ENCODE measurements at regions of chr20 and their contacts with region 1.

Region 1: DNA sequence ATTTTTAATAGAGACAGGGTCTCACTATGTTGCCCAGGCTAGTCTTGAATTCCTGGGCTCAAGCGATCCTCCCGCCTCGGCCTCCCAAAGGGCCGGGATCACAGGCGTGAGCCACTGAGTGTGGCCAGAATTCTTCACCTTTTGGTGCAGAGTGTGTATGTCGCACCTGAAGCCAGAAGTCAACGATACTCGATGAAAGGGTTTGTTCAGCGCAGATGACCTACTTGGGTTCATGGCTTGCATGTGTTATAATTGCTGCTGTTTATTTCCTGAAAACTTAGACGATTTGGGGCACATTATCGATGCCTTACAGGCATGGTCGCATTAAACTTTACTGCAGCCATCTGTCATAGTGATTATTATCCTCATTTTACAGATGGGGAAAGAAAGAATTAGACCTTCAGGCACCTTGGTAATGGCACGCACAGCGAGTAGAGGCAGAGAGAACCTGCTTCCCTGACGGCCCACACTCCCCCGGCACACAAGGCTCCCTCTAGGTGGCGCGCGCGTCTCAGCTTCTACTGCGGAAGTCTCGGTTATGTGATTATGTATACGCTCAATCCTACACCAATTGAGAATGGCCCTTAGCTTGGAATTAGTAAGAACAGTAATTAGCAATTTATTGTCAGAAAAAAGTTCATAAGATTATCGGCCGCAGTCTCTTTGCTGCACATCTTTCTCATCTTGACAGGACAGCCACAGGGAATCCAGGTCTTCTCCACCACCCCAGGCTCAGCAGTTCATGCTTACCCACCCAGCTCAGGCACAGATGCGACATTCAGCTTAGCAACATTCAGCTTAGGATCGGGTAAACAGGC is 212.8 kb upstream of the PROKR2 start:
- DNase-seq: peak; percentile 47
- ATAC-seq: peak; percentile 91
- H3K4me3 ChIP-seq: no peak overlapping the region
- H3K27ac ChIP-seq: no peak overlapping the region
- H3K4me1 ChIP-seq: peaks cover 0 to 7% of the 10 kb centered on the region in 2 experiments; a peak in 1 of 4 replicates
- H3K27me3 ChIP-seq: no peaks in the 10 kb centered on the region
- CTCF ChIP-seq: peak; percentile 69 to 95 (median 94); a peak in 5 of 6 replicates
- POLR2A ChIP-seq: no peak
- RAD21 ChIP-seq: peak; percentile 85

Region 2: GRCh38 chr20:5539691-5540090 is 10.2 kb after region 1 on chr20:
- CTCF ChIA-PET with region 1: interaction called, 10 read pairs
- POLR2A ChIA-PET with region 1: no interaction called
- RAD21 ChIA-PET with region 1: no interaction called
- intact Hi-C with region 1: no loop called
- DNase-seq: no peak
- ATAC-seq: no peak
- H3K4me3 ChIP-seq: no peak overlapping the region
- H3K27ac ChIP-seq: no peak overlapping the region
- H3K4me1 ChIP-seq: no peaks in the 10 kb centered on the region
- H3K27me3 ChIP-seq: no peaks in the 10 kb centered on the region
- CTCF ChIP-seq: no peak
- POLR2A ChIP-seq: no peak
- RAD21 ChIP-seq: no peak

Region 3: DNA sequence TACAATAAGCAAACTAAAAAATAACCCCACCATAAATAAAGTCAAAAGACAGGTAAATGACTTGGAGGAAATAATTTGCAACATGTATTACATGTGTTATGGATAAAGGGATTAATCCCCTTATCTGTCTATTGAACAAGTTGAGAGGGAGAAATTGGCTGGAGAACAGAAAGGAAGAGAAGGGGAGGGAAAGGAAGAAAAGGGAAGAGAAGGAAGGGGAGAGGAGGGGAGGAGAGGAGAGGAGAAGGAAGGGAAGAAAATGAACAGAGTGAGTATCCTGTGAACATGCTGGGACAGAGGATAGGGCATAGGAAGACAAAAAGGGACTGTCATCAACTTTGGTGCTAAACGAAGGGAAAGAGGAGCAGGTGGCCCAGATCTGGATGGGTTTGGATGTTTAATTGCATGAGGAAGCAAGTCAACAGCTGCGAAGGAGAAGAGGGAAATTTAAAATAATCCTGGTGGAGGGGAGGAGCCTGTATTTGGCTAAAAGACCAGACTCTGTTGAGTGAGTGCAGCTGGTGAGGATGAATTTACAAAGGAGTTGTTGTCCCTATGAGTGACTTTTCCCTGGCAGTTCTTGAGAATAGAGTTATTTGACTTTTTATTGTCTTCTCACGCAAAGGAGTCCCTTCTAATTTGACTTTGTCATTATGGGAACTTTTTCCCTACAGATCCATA is 206.4 kb after region 1 on chr20:
- CTCF ChIA-PET with region 1: no interaction called
- POLR2A ChIA-PET with region 1: no interaction called
- RAD21 ChIA-PET with region 1: no interaction called
- intact Hi-C with region 1: no loop called
- DNase-seq: no peak
- ATAC-seq: no peak
- H3K4me3 ChIP-seq: no peak overlapping the region
- H3K27ac ChIP-seq: no peak overlapping the region
- H3K4me1 ChIP-seq: peaks cover 7 to 20% of the 10 kb centered on the region in 2 experiments; a peak in 3 of 4 replicates
- H3K27me3 ChIP-seq: no peaks in the 10 kb centered on the region
- CTCF ChIP-seq: no peak
- POLR2A ChIP-seq: no peak
- RAD21 ChIP-seq: no peak

Region 4: GRCh38 chr20:5781798-5782750 is 252.5 kb after region 1 on chr20:
- CTCF ChIA-PET with region 1: interaction called, 54 read pairs
- POLR2A ChIA-PET with region 1: no interaction called
- RAD21 ChIA-PET with region 1: interaction called in 1 of 2 experiments, 16 read pairs
- intact Hi-C with region 1: no loop called
- DNase-seq: no peak
- ATAC-seq: no peak
- H3K4me3 ChIP-seq: no peak overlapping the region
- H3K27ac ChIP-seq: no peak overlapping the region
- H3K4me1 ChIP-seq: peaks cover 12 to 14% of the 10 kb centered on the region in 2 experiments
- H3K27me3 ChIP-seq: no peaks in the 10 kb centered on the region
- CTCF ChIP-seq: no peak
- POLR2A ChIP-seq: no peak
- RAD21 ChIP-seq: no peak

Region 5: GRCh38 chr20:5788385-5788895 is 258.9 kb after region 1 on chr20:
- CTCF ChIA-PET with region 1: interaction called, 54 read pairs
- POLR2A ChIA-PET with region 1: no interaction called
- RAD21 ChIA-PET with region 1: interaction called, 11 to 16 read pairs
- intact Hi-C with region 1: loop called (anchors 1 kb)
- DNase-seq: peak; percentile 88
- ATAC-seq: peak; percentile 99
- H3K4me3 ChIP-seq: no peak overlapping the region
- H3K27ac ChIP-seq: no peak overlapping the region
- H3K4me1 ChIP-seq: peaks cover 15 to 23% of the 10 kb centered on the region in 2 experiments
- H3K27me3 ChIP-seq: no peaks in the 10 kb centered on the region
- CTCF ChIP-seq: peak; percentile 80 to 95 (median 90)
- POLR2A ChIP-seq: no peak
- RAD21 ChIP-seq: peak; percentile 96

Region 6: DNA sequence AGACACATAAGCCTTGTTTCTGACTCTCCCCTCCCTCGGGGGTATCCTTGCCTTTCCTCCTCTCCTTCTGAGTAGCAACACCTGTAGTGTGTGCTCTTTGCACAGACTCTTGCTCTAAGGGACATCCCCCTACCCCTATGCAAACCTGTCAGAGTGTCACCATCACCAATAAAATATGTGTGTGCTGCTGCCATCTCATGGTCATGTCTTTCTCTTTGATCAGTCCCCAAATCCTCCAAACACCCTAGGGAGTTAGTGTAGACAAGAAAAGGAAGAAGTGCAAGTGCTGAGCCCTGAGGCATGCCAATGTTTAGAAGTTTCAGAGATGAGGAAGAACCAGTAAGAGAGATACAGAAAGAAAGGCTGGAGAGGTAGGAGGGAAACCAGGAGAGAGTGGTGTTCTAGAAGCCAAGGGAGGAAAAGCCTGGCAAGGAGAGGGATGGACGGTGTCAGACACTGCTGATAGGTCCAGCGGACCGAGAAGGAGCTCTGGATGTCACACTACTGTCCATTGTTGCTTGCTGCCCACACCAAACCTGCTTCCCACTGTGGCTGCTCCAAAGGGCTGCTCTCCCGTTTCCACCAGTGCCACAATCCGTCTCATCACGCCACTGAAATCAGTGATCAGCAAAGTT is 404.4 kb after region 1 on chr20:
- CTCF ChIA-PET with region 1: interaction called, 4 read pairs
- POLR2A ChIA-PET with region 1: no interaction called
- RAD21 ChIA-PET with region 1: no interaction called
- intact Hi-C with region 1: loop called (anchors 1 kb)
- DNase-seq: no peak
- ATAC-seq: peak; percentile 81
- H3K4me3 ChIP-seq: no peak overlapping the region
- H3K27ac ChIP-seq: no peak overlapping the region
- H3K4me1 ChIP-seq: no peaks in the 10 kb centered on the region
- H3K27me3 ChIP-seq: peaks cover 11% of the 10 kb centered on the region; the same call in 1 of the 2 replicates
- CTCF ChIP-seq: peak; percentile 17 to 50 (median 47); a peak in 4 of 6 replicates
- POLR2A ChIP-seq: no peak
- RAD21 ChIP-seq: peak; percentile 62

Region 7: GRCh38 chr20:6000871-6001270 is 471.3 kb after region 1 on chr20:
- CTCF ChIA-PET with region 1: no interaction called
- POLR2A ChIA-PET with region 1: no interaction called
- RAD21 ChIA-PET with region 1: no interaction called
- intact Hi-C with region 1: loop called (anchors 5 kb)
- DNase-seq: no peak
- ATAC-seq: no peak
- H3K4me3 ChIP-seq: no peak overlapping the region
- H3K27ac ChIP-seq: no peak overlapping the region
- H3K4me1 ChIP-seq: peaks cover 3 to 4% of the 10 kb centered on the region in 2 experiments; a peak in 3 of 4 replicates
- H3K27me3 ChIP-seq: no peaks in the 10 kb centered on the region
- CTCF ChIP-seq: no peak
- POLR2A ChIP-seq: no peak
- RAD21 ChIP-seq: no peak

Region 8: DNA sequence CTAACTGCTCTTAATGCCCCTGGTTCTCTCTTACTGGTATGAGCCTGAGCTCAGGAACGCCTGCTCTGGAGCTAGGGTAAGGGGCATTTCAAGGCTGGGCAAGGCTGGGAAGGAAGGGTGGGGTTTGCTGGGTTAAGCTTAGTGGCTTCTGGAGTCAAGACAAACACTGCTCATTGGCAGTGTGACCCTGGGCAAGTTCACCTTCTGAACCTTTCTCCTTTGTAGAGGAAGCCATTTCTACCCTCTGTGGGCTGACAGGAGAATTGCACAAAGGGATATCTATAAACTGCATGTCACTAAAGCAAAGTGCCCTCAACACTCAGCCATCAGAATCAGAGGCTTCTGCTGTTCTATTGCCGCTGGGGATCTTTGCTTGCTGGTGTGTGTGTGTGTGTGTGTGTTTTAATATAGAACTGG is 544.6 kb after region 1 on chr20:
- CTCF ChIA-PET with region 1: interaction called, 17 read pairs
- POLR2A ChIA-PET with region 1: no interaction called
- RAD21 ChIA-PET with region 1: interaction called in 1 of 2 experiments, 3 read pairs
- intact Hi-C with region 1: loop called (anchors 1 kb)
- DNase-seq: no peak
- ATAC-seq: peak; percentile 73
- H3K4me3 ChIP-seq: no peak overlapping the region
- H3K27ac ChIP-seq: no peak overlapping the region
- H3K4me1 ChIP-seq: no peaks in the 10 kb centered on the region
- H3K27me3 ChIP-seq: no peaks in the 10 kb centered on the region
- CTCF ChIP-seq: no peak
- POLR2A ChIP-seq: no peak
- RAD21 ChIP-seq: peak; percentile 8; the same call in 1 of the 2 replicates